GM18951 (cell line): ENCODE measurements at regions of chr20 and their contacts with region 1.

Region 1: DNA sequence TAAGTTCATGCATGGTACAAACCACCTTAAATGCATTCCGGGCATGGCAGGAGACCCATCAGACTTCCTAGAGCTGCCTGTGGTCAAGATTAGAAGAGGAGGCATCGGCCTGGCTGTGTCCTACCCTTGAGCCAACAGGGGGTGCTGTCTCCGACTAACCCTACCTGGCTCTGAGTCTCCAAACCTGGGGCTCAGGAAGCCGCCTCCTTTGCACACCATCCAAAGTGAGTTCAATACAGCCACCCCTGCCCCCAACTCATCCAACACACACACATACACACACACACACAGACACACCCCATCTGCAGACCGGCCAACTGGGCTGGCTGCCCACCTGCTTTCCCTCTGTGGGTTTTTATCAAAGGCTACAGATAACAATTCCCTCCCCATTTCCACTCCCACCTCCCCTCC is 77.0 kb downstream of the JPH2 start:
- POLR2A ChIP-seq: no peak

Region 2: DNA sequence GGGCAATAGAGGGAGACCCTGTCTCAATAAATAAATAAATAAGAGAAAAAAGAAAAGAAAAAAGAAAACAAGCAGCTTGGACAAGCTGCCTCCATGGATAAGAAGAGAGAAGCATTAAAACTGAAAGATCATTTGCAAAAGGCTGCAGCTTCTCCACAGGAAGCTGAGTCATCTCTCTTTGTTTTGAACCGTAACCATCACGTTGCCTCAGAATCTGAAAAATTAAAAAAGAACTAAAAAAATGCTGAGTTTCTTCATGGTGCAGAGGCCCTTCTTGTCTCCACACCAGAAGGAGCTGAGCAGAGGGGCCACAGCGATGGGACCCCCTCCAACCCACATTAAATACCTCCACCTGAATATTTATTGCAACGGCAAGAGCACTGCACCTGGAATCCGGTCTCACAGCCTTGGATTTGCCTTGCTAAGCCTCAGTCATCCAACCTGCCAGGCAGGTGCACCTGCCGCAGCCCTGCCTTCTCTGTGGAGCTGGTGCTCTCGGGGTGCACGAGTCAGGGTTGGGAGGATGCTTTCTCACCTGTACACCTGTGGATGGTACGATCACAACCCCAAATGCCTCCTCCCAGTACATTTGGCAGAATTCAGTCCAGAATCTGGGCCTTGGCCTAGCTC is 167.2 kb before region 1 on chr20:
- in situ Hi-C with region 1: no loop called
- POLR2A ChIP-seq: peak; percentile 21

Region 3: GRCh38 chr20:44187051-44187762 is 77.3 kb after region 1 on chr20 and contains the start of gene JPH2:
- in situ Hi-C with region 1: loop called (anchors 5 kb)
- POLR2A ChIP-seq: no peak